Cardiac septum (tissue), 1 donor: ENCODE measurements at regions of chr12 and their contacts with region 1.

Region 1: DNA sequence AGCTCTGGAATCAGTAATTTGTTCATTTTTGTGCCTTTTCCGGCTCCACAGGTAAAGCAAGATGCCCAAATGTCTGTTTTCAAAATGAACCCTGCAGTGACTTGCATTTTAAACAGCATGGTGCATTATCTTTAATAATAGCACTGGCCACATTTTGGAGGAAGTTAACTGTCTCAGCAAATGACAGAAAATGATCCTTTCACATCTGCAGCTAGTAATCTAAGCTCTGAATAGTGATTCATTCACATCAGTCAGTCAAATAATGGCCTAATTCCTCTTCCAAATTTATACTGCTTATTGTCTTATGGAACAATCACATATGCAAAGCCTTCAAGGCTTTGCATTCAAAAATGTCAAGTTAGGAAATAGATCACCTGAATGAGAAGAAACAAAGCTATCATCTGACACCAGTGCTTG is 75.6 kb downstream of the PPM1H start:
- DNase-seq: no peak

Region 2: GRCh38 chr12:62530596-62530995 is 328.7 kb before region 1 on chr12:
- intact Hi-C with region 1: no loop called
- DNase-seq: no peak

Region 3: GRCh38 chr12:62834971-62835547 is 24.3 kb before region 1 on chr12:
- intact Hi-C with region 1: no loop called
- DNase-seq: no peak

Region 4: DNA sequence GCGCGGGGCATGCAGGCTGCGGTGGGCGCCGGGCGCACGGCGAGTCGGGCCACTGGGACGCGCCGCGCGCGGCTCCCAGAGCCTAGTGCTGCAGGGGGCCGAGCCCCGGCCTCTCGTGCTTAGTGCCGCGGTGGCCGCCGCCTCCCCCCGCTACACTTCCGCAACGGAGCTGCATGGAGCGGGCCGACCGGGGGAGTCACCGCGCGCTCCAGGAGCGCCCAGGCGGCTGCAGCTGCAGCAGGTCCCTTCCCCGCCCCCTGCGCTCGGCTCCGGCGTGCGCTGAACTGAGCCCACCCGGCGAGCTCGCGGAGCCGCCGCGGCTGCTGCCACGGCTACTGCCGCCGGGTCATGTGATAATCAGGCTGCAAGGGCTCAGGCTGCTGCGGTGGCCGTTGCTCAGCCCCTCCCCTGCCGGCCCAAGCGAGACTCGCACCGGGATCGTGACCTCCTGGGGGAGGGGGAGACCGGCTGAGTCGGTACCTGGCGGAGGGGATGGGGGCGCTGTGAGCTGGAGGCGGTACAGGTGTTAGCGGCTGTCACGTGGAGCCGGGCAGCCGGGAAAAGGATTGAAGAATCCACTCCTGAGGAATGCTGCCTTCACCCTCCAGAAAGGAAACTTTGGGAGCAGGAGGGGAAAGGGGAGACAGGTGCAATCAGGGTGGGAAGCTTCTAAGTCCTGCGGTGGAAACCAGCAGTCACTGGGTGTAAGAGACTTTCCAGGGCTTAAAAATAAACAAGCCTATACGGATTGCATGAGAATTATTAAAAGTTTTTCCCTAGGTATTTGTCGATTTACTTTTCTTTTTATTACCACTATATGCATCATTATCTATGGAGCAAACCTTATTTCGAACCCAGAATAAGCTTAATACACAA is 75.7 kb after region 1 on chr12 and contains the start of gene PPM1H:
- intact Hi-C with region 1: loop called (anchors 10 kb)
- DNase-seq: peak; percentile 85
- total RNA-seq, gene PPM1H: 4.0 TPM